Calu3 (cell line): ENCODE measurements at regions of chr17 and their contacts with region 1.

Region 1: DNA sequence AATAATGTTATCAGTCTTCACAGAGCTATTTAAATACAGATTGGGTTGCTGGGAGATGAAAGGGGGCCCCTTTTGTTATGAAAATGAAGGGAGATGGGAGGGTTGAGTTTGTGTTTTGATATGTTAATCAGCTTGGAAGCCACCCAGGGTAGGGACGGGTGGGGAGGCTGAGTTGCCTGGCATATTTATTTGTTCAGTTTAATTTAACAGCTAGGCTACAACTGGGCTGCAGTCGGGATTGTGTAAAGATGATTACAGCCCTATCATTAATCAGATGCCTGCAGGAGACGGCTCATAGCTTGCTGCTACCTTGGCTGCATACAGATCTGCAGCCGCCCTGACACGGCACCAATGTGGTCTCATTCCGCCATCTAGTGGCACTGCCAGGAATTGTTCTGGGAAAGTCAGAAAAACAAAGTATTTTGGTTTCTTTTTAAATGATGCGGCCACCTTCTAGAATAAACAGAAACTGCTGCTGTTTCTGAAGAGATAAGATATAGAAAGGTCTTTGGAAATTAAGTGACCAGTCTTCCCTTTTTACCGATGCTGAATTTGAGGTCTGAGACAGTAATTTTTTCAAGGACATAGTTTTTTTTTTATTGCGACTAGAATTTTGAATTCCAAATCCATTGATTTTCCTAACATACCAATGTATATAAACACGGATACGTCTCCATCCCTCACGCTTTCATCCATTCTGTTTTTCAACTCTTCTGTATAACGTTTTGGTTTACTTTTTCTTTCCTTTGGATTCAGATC is 458.0 kb upstream of the ASIC2 start:
- DNase-seq: peak; percentile 64
- H3K4me3 Mint-ChIP-seq: no peak overlapping the region
- H3K27ac Mint-ChIP-seq: no peak overlapping the region
- H3K4me1 Mint-ChIP-seq: no peaks in the 10 kb centered on the region
- H3K27me3 Mint-ChIP-seq: peaks cover 78% of the 10 kb centered on the region
- CTCF ChIP-seq: peak; percentile 82

Region 2: DNA sequence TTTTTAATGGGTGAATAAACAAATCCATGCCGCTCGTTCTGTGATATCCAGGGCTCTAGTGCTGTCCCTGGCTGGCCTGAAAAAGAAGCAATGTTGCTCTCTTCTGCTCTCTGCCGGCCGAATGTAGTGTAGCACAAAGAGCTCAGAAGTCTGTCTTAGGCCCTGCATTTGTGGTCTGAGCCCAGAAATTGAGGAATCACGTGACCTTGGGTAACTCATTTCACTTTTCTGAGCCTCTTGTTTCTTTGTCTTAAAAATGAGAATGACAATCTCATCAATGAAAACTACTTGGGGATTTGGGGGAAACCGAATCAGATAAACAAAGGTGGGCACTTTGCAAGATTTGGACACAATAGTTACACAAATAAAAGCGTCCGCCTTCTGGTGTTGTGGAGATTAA is 76.4 kb before region 1 on chr17:
- CTCF ChIA-PET with region 1: interaction called, 4 read pairs
- intact Hi-C with region 1: loop called (anchors 1 kb)
- DNase-seq: peak; percentile 67
- H3K4me3 Mint-ChIP-seq: no peak overlapping the region
- H3K27ac Mint-ChIP-seq: no peak overlapping the region
- H3K4me1 Mint-ChIP-seq: no peaks in the 10 kb centered on the region
- H3K27me3 Mint-ChIP-seq: peaks cover 56% of the 10 kb centered on the region
- CTCF ChIP-seq: peak; percentile 62

Region 3: GRCh38 chr17:33725675-33726271 is 25.3 kb before region 1 on chr17:
- CTCF ChIA-PET with region 1: interaction called, 3 read pairs
- intact Hi-C with region 1: loop called (anchors 2 kb)
- DNase-seq: peak; percentile 57
- H3K4me3 Mint-ChIP-seq: no peak overlapping the region
- H3K27ac Mint-ChIP-seq: no peak overlapping the region
- H3K4me1 Mint-ChIP-seq: no peaks in the 10 kb centered on the region
- H3K27me3 Mint-ChIP-seq: peaks cover 88% of the 10 kb centered on the region
- CTCF ChIP-seq: peak; percentile 57